GM10248 (cell line): ENCODE measurements at regions of chr2 and their contacts with region 1.

Region 1: GRCh38 chr2:219294356-219295351 is 14.5 kb downstream of the PTPRN start:
- DNase-seq: peak; percentile 98
- CTCF ChIP-seq: peak; percentile 99

Region 2: GRCh38 chr2:219160186-219161017 is 134.3 kb before region 1 on chr2 and contains the start of gene NHEJ1:
- CTCF ChIA-PET with region 1: interaction called, 260 read pairs
- POLR2A ChIA-PET with region 1: no interaction called
- DNase-seq: peak; percentile 97
- CTCF ChIP-seq: peak; percentile 94

Region 3: GRCh38 chr2:219186754-219187456 is 107.7 kb before region 1 on chr2:
- CTCF ChIA-PET with region 1: interaction called, 15 read pairs
- POLR2A ChIA-PET with region 1: no interaction called
- DNase-seq: peak; percentile 39
- CTCF ChIP-seq: no peak

Region 4: DNA sequence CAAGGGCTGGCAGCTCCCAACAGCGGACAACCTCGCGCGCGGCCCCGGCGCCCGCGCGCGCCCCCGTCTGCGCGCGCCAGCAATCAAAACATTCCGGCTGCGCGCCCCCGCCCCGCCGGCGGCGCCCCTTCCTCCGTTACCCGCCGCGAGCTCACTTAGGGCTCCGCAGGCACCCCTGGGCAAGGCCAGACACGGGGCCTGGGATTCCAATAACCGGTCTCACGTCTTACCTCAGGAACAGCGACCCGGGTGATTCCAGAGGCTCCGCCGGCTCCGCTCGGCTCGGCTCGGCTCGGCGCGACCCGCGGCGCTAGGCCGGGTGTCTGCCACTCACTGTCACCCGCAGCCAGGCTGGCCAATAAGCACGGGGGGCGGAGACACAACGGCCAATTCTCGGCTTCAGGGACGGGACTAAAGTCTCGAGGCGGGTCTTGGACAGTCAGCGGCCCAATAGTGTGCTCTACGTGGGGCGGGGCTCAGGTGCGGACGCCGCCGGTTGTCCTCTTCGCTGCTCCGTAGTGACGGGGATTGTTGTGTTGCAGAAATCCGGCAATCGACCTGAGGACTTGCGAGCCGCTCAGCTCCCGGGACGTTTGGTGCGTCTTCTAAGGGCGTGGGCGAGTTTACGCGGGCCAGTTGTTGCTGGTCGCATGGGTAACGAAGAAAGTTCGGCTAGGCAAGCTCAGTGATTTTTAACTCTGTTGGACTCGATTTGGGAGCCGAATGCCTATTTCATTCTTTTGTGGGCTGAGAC is 65.2 kb before region 1 on chr2 and contains the starts of genes ANKZF1 and ATG9A:
- CTCF ChIA-PET with region 1: interaction called, 15 read pairs
- POLR2A ChIA-PET with region 1: no interaction called
- DNase-seq: peak; percentile 99
- CTCF ChIP-seq: no peak

Region 5: GRCh38 chr2:219253753-219254590 is 40.7 kb before region 1 on chr2 and contains the start of gene TUBA4A:
- CTCF ChIA-PET with region 1: interaction called, 116 read pairs
- POLR2A ChIA-PET with region 1: interaction called, 3 read pairs
- DNase-seq: peak; percentile 98
- CTCF ChIP-seq: no peak

Region 6: DNA sequence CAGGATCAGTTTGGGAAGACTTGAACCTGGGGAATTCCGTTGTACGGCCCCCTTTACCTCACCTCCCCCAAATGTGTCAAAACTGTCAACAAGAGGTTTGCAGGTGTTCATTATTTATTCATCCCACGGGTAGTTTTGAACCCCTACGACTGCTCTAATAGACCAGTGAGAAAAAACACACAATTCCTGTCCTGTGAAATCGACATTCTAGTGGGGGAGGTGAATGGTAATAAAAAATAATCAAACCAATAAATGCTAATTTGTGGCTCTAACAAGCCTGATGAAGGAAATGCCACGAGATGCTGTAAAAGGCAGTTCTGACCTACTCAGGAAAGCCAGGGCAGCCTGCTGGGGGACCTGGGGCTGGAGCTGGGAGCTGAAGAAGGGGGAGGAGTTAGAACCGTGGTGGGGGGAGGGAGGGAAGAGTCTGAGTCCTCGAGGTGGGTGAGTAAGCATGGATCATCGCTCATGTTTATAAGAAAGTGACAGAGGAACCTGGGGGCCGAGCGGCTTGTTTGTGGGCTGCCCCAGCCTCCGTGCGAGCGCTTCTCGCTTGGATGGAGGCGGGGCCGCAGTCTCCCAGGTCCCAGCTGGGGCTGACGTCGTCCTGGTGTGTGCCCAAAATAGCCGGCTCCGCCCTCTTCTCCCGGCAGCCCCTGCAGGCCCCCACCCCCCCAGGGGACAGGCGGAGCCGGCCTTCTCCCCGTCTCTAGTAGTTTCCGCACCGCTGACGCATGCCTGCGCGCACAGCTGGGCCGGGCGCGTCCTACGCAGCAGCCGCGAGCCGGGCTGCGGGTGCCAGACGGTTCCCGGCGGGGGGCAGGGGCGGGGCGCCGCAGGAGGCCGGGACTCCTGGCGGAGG is 15.8 kb before region 1 on chr2 and contains the start of gene DNAJB2:
- CTCF ChIA-PET with region 1: interaction called, 336 read pairs
- POLR2A ChIA-PET with region 1: interaction called, 5 read pairs
- DNase-seq: peak; percentile 100
- CTCF ChIP-seq: no peak

Region 7: GRCh38 chr2:219498280-219499057 is 203.8 kb after region 1 on chr2 and contains the start of gene GMPPA:
- CTCF ChIA-PET with region 1: interaction called, 10 read pairs
- POLR2A ChIA-PET with region 1: no interaction called
- DNase-seq: peak; percentile 98
- CTCF ChIP-seq: no peak

Region 8: DNA sequence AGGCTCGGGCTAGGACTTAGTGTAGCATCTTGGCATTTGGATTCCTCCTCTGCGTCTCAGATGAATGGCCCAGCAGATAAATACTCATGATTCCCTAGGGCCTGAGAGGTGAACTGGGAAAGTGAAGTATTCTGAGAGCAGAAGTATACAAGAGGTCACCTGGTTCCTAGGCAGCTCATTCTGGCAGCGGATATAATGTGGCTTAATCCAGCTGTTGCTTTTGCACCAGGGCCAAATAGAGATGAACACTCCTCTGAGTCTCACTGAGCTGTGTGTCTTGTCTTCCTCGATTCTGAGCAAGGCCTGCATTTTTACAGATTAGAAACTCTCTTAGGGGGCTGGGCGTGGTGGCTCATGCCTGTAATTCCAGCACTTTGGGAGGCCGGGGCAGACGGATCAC is 528.9 kb after region 1 on chr2:
- CTCF ChIA-PET with region 1: no interaction called
- POLR2A ChIA-PET with region 1: no interaction called
- DNase-seq: no peak
- CTCF ChIP-seq: no peak